Prostate gland (tissue), 2 donors: ENCODE measurements at regions of chr2 and their contacts with region 1.

Region 1: DNA sequence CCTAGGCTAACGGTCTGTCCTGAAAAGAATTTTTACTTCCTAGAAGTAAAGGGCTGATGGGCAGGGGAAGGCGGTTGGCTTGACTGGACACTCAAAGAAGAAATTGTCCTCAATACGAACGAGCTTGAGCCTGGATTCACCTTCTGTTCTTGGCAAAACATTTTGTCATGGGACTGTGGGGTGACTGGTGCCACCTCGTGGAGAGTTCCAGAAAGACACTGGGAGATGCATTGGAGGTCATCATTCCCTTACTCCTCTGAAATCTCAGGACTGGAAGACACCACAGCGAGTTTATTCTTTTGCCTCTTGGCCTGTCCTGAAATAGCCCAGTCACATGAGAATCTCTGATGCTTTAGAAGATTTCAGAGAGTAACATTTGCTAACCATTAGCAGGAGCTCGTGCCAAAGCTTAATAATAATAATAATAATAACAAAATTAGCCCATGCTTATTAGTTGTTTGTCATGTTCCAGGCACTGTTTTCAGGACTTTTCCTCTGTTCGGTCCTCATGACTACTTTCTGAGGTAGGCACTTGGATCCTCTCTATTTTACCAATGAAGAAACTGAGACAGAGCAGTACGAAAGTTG is 44.5 kb downstream of the TMEM182 start:
- DNase-seq: peak; percentile 61
- H3K4me3 ChIP-seq: no peak overlapping the region
- H3K27ac ChIP-seq: no peak overlapping the region
- H3K4me1 ChIP-seq: no peaks in the 10 kb centered on the region
- H3K27me3 ChIP-seq: no peaks in the 10 kb centered on the region
- CTCF ChIP-seq: peak; percentile 14 to 74 (median 70)
- POLR2A ChIP-seq: no peak

Region 2: DNA sequence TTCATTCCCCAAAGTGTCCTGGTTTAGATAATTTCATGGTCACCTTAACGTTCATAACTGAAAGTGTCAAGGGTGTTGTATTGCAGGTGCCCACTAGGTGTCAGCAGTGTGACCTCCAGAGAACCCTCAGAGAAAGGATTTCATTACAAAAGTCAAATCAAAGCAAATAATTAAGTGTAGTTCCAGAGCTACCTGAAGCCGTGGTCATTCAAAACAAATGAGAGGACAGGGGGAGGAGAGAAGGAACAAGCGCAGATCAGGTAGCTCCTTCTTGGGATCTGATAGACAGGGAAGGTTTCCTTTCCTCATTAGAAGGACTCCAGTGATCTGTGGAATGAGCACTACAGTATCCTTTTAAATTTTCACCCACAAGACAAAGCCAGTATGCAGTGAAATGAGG is 333.3 kb before region 1 on chr2 and contains the start of gene SLC9A4:
- intact Hi-C with region 1: loop called (anchors 10 kb)
- DNase-seq: peak; percentile 44
- H3K4me3 ChIP-seq: no peak within 1 kb of the TSS
- H3K27ac ChIP-seq: no peak within 1 kb of the TSS
- H3K4me1 ChIP-seq: no peaks in the 10 kb centered on the region
- H3K27me3 ChIP-seq: no peaks in the 10 kb centered on the region
- CTCF ChIP-seq: peak; percentile 41 to 83 (median 67)
- POLR2A ChIP-seq: no peak
- total RNA-seq, gene SLC9A4: not detected

Region 3: GRCh38 chr2:102753563-102754159 is 52.7 kb before region 1 on chr2:
- intact Hi-C with region 1: loop called (anchors 2 kb)
- DNase-seq: peak; percentile 19
- H3K4me3 ChIP-seq: no peak overlapping the region
- H3K27ac ChIP-seq: no peak overlapping the region
- H3K4me1 ChIP-seq: no peaks in the 10 kb centered on the region
- H3K27me3 ChIP-seq: no peaks in the 10 kb centered on the region
- CTCF ChIP-seq: peak; percentile 65 to 79 (median 69)
- POLR2A ChIP-seq: no peak

Region 4: DNA sequence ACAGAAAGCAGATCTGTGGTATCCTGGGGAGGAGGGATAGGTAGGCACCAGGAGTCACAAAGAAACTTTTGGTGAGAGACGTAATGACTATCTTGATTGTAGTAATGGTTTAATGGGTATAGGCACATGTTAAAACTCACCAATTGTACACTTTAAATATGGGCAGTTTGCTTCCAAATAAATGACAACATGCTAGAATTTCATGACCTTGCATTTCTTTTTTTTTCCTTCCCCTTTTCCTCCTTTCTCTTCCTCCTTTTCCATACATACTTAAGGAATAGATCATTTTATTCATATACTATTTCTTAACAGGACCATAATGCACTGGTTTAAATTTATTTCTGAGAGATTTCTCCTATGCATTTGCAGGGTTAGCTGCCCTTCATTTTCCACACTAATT is 297.3 kb after region 1 on chr2:
- intact Hi-C with region 1: no loop called
- DNase-seq: no peak
- H3K4me3 ChIP-seq: no peak overlapping the region
- H3K27ac ChIP-seq: no peak overlapping the region
- H3K4me1 ChIP-seq: no peaks in the 10 kb centered on the region
- H3K27me3 ChIP-seq: no peaks in the 10 kb centered on the region
- CTCF ChIP-seq: no peak
- POLR2A ChIP-seq: no peak

Region 5: GRCh38 chr2:103123516-103123915 is 317.2 kb after region 1 on chr2:
- intact Hi-C with region 1: no loop called
- DNase-seq: no peak
- H3K4me3 ChIP-seq: no peak overlapping the region
- H3K27ac ChIP-seq: no peak overlapping the region
- H3K4me1 ChIP-seq: no peaks in the 10 kb centered on the region
- H3K27me3 ChIP-seq: no peaks in the 10 kb centered on the region
- CTCF ChIP-seq: no peak
- POLR2A ChIP-seq: no peak